Activated CD4-positive, alpha-beta T cell treated with anti-CD3 and anti-CD28 coated beads, Interleukin-2, amount 10 ng/mL, durations not matched to agents 24 days and 14 days (primary cell): ENCODE measurements at regions of chr7 and their contacts with region 1.

Region 1: GRCh38 chr7:150514748-150515222 is at the start of gene GIMAP7:
- DNase-seq: peak; percentile 93
- H3K4me3 Mint-ChIP-seq: peak within 1 kb of the TSS; percentile 99
- H3K27ac Mint-ChIP-seq: peak within 1 kb of the TSS; percentile 99
- H3K4me1 Mint-ChIP-seq: peaks cover 54% of the 10 kb centered on the region
- H3K27me3 Mint-ChIP-seq: no peaks in the 10 kb centered on the region
- total RNA-seq, gene GIMAP7: 40.5 and 45.0 TPM in 2 replicates

Region 2: DNA sequence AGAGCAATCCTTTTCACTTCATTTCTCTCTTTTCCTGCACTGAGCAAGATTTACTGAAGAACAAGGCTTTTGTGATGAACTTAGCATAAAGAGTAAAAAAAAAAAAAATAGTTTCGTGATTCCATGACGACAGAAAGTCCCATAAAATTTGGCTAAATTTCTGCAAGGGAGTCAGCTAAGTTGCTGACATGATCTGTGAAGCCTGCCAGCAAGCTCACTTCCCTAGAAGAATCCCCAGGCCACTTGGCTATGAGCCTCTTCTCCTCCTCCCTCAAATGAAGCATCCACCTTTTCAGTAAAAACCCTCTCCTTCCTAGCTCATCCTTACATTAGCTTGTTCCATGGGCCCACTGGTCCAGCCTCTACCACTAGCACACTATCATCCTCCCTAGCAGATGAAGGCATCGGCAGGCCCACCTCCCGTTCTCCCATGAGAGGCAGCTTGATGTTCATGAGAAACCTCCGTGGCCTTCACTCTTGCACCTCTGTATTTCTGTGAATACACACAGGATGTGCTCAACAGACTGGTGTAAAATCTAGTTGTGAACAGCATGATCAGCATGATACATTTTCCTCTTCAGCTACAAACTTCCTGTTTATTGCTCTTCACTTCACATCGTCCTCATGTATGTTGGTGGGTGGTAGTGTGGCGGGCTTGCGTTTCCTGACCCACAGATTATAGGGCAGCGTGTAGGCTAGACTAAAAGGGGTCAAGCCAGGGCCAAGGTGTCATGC is 33.4 kb before region 1 on chr7:
- intact Hi-C with region 1: loop called (anchors 1 kb)
- DNase-seq: peak; percentile 90
- H3K4me3 Mint-ChIP-seq: peak overlapping the region; percentile 86
- H3K27ac Mint-ChIP-seq: peak overlapping the region; percentile 100
- H3K4me1 Mint-ChIP-seq: peaks cover 87% of the 10 kb centered on the region
- H3K27me3 Mint-ChIP-seq: no peaks in the 10 kb centered on the region

Region 3: GRCh38 chr7:150502519-150502918 is 12.3 kb before region 1 on chr7:
- intact Hi-C with region 1: loop called (anchors 1 kb)
- DNase-seq: peak; percentile 85
- H3K4me3 Mint-ChIP-seq: peak overlapping the region; percentile 58
- H3K27ac Mint-ChIP-seq: peak overlapping the region; percentile 93
- H3K4me1 Mint-ChIP-seq: peaks cover 66% of the 10 kb centered on the region
- H3K27me3 Mint-ChIP-seq: no peaks in the 10 kb centered on the region

Region 4: GRCh38 chr7:150567169-150567568 is 52.4 kb after region 1 on chr7 and contains the start of gene GIMAP4:
- intact Hi-C with region 1: loop called (anchors 2 kb)
- DNase-seq: peak; percentile 77
- H3K4me3 Mint-ChIP-seq: peak within 1 kb of the TSS; percentile 86
- H3K27ac Mint-ChIP-seq: peak within 1 kb of the TSS; percentile 95
- H3K4me1 Mint-ChIP-seq: peaks cover 59% of the 10 kb centered on the region
- H3K27me3 Mint-ChIP-seq: no peaks in the 10 kb centered on the region
- total RNA-seq, gene GIMAP4: 61.1 and 62.7 TPM in 2 replicates

Region 5: DNA sequence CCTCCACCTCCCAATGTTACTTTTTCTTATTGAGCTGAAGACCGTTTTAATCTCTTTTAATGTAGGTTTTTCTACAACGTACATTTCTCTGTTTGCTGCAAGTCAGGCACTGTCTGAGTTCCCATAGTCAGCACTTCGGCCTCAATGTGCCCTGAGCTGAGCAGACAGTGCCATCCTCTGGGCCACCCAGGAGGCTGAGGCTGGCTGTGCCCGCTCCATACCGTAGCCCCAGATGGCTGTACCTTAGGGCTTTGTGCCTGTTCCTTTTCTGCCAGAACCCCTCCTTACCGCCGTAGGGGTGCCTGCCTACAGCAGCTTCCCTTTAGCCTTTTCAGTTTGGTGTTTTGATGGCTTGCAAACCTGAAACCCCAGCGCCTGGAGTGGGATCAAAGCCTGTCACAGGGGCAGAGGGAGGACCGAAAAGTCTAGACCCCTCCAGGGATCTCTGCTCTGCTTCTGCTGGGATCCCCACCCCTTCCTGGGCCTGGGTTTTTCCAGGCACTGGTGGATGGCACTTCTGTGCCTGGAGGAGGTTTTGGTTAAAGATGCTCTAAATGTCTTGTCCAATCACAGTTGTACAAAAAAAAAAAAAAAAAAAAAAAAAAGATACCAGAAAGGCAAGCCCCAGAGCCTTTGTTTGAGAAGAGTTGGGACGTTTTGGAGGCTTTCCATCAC is 580.5 kb after region 1 on chr7:
- intact Hi-C with region 1: no loop called
- DNase-seq: no peak
- H3K4me3 Mint-ChIP-seq: no peak overlapping the region
- H3K27ac Mint-ChIP-seq: no peak overlapping the region
- H3K4me1 Mint-ChIP-seq: peaks cover 4% of the 10 kb centered on the region
- H3K27me3 Mint-ChIP-seq: no peaks in the 10 kb centered on the region